Activated naive CD4-positive, alpha-beta T cell treated with anti-CD3 and anti-CD28 coated beads for 36 hours (primary cell): ENCODE measurements at regions of chr2 and their contacts with region 1.

Region 1: GRCh38 chr2:43611987-43612894 is 16.4 kb upstream of the THADA start:
- DNase-seq: peak; percentile 91
- H3K4me3 Mint-ChIP-seq: no peak overlapping the region
- H3K27ac Mint-ChIP-seq: no peak overlapping the region
- H3K4me1 Mint-ChIP-seq: no peaks in the 10 kb centered on the region
- H3K27me3 Mint-ChIP-seq: peaks cover 3% of the 10 kb centered on the region

Region 2: GRCh38 chr2:42859006-42859552 is 753.2 kb before region 1 on chr2:
- CTCF ChIA-PET with region 1: interaction called, 3 read pairs
- intact Hi-C with region 1: loop called (anchors 1 kb)
- DNase-seq: peak; percentile 91
- H3K4me3 Mint-ChIP-seq: no peak overlapping the region
- H3K27ac Mint-ChIP-seq: no peak overlapping the region
- H3K4me1 Mint-ChIP-seq: peaks cover 12% of the 10 kb centered on the region
- H3K27me3 Mint-ChIP-seq: no peaks in the 10 kb centered on the region

Region 3: GRCh38 chr2:42944779-42945415 is 667.3 kb before region 1 on chr2:
- CTCF ChIA-PET with region 1: interaction called, 7 read pairs
- intact Hi-C with region 1: loop called (anchors 1 kb)
- DNase-seq: no peak
- H3K4me3 Mint-ChIP-seq: no peak overlapping the region
- H3K27ac Mint-ChIP-seq: no peak overlapping the region
- H3K4me1 Mint-ChIP-seq: peaks cover 2% of the 10 kb centered on the region
- H3K27me3 Mint-ChIP-seq: no peaks in the 10 kb centered on the region

Region 4: DNA sequence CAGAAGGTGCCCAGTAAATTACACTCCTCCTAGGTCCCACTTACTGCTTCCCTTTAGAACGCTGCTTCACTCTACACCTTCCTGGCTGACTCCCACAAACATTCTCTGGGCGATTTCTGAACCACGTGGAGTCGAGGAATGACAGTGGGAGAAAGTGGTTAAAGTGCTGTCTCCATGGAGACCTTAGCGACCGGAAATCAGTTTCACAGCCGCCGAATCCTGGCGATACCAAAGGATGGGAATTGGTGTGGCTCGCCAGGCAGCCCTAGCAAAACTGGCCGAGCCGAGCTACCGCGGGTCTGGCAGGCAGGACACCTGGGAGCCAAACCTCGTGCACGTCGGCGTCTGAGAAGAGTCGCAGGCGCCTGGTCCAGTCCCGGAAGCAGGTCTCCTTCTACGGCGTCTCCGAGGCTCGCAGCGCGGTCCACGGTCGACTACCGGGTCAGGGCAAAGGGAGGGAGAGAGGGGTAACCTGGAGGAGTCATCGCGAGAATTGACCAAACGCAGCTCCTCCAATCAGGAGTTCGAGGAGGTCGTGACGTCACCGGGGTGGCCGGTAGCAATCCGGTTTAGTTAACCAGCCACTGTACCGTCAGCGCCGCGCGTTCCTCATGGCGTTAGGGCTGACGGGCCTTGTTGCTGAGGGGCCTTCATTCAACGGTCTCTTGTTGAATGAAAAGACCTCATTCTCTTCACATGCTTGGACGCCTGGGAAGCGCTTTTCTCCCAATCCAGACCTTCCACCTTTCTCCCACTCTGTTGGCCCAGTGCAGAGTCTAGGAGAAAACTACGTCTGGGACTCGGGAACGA is 16.4 kb before region 1 on chr2 and contains the start of gene THADA:
- CTCF ChIA-PET with region 1: interaction called, 20 read pairs
- intact Hi-C with region 1: loop called (anchors 1 kb)
- DNase-seq: peak; percentile 99
- H3K4me3 Mint-ChIP-seq: peak within 1 kb of the TSS; percentile 94
- H3K27ac Mint-ChIP-seq: peak within 1 kb of the TSS; percentile 96
- H3K4me1 Mint-ChIP-seq: peaks cover 31% of the 10 kb centered on the region
- H3K27me3 Mint-ChIP-seq: no peaks in the 10 kb centered on the region
- total RNA-seq, gene THADA: 28.6 to 31.5 TPM

Region 5: DNA sequence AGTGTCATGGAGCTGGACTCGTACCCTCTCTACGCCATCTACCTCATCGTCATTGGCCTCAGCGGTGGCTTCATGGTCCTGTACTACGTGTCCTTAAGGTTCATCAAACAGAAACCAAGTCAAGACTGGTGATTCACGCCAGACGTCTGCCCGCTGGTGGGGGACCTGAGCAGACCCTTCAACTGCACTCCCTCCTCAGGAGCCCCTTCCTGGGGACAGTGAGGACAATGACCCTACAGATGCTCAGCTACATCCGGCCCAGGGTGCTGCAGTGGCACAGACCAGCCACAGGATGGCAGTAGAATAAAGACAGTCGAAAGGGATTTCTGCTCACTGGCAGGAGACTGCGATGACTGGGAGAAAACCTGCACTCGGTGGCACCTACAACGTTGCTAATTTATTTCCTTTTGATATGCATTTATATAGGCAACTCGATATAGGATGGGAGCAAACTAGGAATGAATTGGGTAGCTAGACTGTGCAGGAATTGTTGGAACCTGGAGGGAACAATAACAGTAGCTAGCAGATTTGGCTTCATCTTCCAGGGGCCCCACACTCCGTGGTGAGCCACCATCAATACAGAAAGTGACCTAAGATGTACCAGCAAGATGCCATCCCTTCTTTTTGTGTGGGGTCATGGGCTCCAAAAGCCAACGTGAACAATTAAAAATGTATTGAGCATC is 265.7 kb after region 1 on chr2:
- CTCF ChIA-PET with region 1: interaction called, 6 read pairs
- intact Hi-C with region 1: loop called (anchors 1 kb)
- DNase-seq: peak; percentile 86
- H3K4me3 Mint-ChIP-seq: no peak overlapping the region
- H3K27ac Mint-ChIP-seq: no peak overlapping the region
- H3K4me1 Mint-ChIP-seq: peaks cover 3% of the 10 kb centered on the region
- H3K27me3 Mint-ChIP-seq: peaks cover 16% of the 10 kb centered on the region